AG04450 (cell line): ENCODE measurements at regions of chr3 and their contacts with region 1.

Region 1: GRCh38 chr3:148075763-148076716 is 621.7 kb upstream of the AGTR1 start:
- DNase-seq: peak; percentile 27
- H3K4me3 ChIP-seq: no peak overlapping the region
- H3K27ac ChIP-seq: no peak overlapping the region
- H3K27me3 ChIP-seq: no peaks in the 10 kb centered on the region
- CTCF ChIP-seq: peak; percentile 90

Region 2: DNA sequence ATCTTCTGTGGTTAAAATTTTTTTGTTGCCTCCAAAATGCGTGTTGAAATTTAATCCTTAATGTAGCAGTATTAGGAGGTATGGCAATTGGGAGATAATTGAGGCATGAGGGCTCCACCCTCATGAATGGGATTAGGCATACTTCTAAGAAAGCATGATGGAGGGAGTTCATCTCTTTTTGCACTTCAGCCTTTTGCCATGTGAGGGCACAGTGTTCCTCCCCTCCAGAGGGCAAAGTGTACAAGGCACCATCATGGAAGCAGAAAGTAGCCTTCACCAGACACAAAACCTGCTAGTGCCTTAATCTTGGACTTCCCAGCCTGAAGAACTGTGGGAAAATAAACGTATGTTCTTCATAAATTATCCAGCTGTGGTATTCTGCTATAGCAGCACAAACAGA is 237.4 kb before region 1 on chr3:
- CTCF ChIA-PET with region 1: interaction called, 46 read pairs
- POLR2A ChIA-PET with region 1: no interaction called
- DNase-seq: no peak
- H3K4me3 ChIP-seq: no peak overlapping the region
- H3K27ac ChIP-seq: no peak overlapping the region
- H3K27me3 ChIP-seq: no peaks in the 10 kb centered on the region
- CTCF ChIP-seq: peak; percentile 58

Region 3: DNA sequence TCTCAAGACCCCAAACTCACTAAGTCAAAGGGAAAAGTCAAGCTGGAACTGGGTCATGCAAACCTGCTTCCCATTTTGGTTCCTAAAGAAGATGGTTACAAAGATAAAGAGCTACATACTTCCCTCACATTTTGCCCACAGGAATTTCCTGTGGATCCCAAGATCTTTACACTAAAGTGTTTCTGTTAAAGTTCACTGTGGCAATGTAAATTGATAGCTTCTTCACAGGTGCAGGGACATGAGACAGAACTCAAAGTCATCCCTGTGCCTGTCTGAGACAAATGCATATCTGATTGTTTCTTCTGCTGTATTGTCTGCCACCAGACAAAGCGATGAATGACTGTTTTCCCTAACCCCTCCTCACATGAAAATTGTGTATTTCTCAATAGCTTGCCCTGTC is 99.0 kb before region 1 on chr3:
- CTCF ChIA-PET with region 1: no interaction called
- POLR2A ChIA-PET with region 1: no interaction called
- DNase-seq: no peak
- H3K4me3 ChIP-seq: no peak overlapping the region
- H3K27ac ChIP-seq: no peak overlapping the region
- H3K27me3 ChIP-seq: no peaks in the 10 kb centered on the region
- CTCF ChIP-seq: no peak

Region 4: DNA sequence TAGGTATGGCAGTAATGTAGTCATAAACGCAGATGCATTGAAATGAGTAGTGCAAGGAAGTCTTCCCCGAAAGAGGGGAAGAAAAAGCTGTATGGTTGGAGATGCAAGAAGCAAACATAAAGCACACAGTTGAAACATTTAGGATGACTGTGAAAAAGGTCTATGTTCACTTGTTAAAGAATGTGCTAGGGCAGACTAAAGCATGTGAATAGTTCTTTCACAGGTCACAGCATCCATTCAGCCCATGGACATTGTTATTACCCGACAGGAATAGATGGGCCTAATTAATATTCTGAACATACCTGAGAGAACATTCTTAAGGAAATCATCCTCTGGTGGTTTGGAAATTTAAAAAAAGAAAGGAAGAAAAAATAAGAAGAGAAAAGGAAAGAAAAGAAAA is 71.7 kb before region 1 on chr3:
- CTCF ChIA-PET with region 1: no interaction called
- POLR2A ChIA-PET with region 1: no interaction called
- DNase-seq: no peak
- H3K4me3 ChIP-seq: no peak overlapping the region
- H3K27ac ChIP-seq: no peak overlapping the region
- H3K27me3 ChIP-seq: no peaks in the 10 kb centered on the region
- CTCF ChIP-seq: no peak